ENCODE measurements at regions of chr1 and their contacts with region 1.

Region 1: GRCh38 chr1:51058858-51059257 is 43.2 kb upstream of the C1orf185 start:
- DNase-seq: peak; percentile 37
- ATAC-seq: peak; percentile 75
- H3K4me3 ChIP-seq: no peak overlapping the region
- H3K27ac ChIP-seq: no peak overlapping the region
- H3K4me1 ChIP-seq: peaks cover 4% of the 10 kb centered on the region; the same call in 1 of the 2 replicates
- H3K27me3 ChIP-seq: peaks cover 2% of the 10 kb centered on the region
- CTCF ChIP-seq: peak; percentile 60
- POLR2A ChIP-seq: no peak
- RAD21 ChIP-seq: peak; percentile 75

Region 2: GRCh38 chr1:50750021-50750619 is 308.7 kb before region 1 on chr1:
- CTCF ChIA-PET with region 1: no interaction called
- POLR2A ChIA-PET with region 1: no interaction called
- dilution Hi-C with region 1: no loop called
- in situ Hi-C with region 1: no loop called
- intact Hi-C with region 1: loop called (anchors 2 kb)
- DNase-seq: peak; percentile 36
- ATAC-seq: peak; percentile 88
- H3K4me3 ChIP-seq: no peak overlapping the region
- H3K27ac ChIP-seq: no peak overlapping the region
- H3K4me1 ChIP-seq: peaks cover 2% of the 10 kb centered on the region; the same call in 1 of the 2 replicates
- H3K27me3 ChIP-seq: no peaks in the 10 kb centered on the region
- CTCF ChIP-seq: peak; percentile 53
- POLR2A ChIP-seq: no peak
- RAD21 ChIP-seq: peak; percentile 64

Region 3: DNA sequence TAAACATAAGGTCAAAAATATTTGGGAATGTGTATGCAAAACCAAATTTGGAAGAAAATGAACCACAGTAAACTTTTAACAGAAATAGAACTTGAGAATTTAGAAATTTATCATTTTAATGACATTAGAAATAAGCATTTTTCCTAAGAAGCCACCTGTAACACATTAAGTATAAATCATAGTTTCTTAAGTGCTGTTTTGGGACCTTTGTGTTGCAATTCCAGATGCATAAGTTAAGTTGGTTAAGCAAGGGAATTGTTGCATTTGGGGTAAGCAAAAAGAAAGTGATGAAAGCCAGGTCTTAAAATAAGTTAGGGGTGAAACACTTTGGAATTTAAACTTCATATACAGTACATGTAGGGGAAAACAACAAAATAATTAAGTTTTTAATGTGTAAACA is 39.0 kb before region 1 on chr1:
- CTCF ChIA-PET with region 1: no interaction called
- POLR2A ChIA-PET with region 1: no interaction called
- dilution Hi-C with region 1: no loop called
- in situ Hi-C with region 1: no loop called
- intact Hi-C with region 1: loop called (anchors 5 kb)
- DNase-seq: no peak
- ATAC-seq: no peak
- H3K4me3 ChIP-seq: no peak overlapping the region
- H3K27ac ChIP-seq: no peak overlapping the region
- H3K4me1 ChIP-seq: no peaks in the 10 kb centered on the region
- H3K27me3 ChIP-seq: no peaks in the 10 kb centered on the region
- CTCF ChIP-seq: no peak
- POLR2A ChIP-seq: no peak
- RAD21 ChIP-seq: no peak